ENCODE measurements at regions of chr10 and their contacts with region 1.

Region 1: GRCh38 chr10:63133056-63133820 is at the start of gene NRBF2:
- DNase-seq: peak; percentile 99
- ATAC-seq: peak; percentile 99 to 100
- total RNA-seq, gene NRBF2: 12.7 to 18.7 TPM

Region 2: DNA sequence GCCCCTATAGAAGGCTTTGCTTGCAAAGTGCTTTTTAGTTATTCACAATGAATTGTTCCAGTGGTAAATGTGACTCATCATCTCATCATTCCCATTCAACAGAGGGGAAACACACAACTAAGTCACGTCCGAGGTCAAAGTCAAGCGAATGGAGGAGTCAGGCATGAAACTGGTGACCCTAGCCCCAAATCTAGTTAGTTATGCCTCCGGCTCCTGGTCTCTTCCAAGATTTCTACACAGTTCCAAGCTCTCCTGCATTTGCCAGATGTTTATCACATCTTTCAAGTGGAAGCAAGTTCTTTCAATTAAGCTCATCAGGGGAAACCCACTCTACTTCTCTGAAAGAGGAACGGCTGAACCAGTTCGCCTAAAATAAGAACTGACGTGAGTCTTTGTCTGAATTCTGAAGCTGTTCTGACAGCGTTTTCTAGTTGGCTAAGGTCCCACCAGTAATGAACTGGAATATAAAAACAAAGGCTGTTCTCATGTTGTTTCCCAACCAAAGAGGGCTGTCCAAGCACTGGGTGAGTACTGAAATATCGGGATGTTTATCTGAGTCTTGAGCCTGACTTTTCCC is 141.0 kb before region 1 on chr10:
- intact Hi-C with region 1: loop called in 1 of 2 experiments (anchors 10 kb)
- DNase-seq: no peak
- ATAC-seq: peak; percentile 58 to 82

Region 3: DNA sequence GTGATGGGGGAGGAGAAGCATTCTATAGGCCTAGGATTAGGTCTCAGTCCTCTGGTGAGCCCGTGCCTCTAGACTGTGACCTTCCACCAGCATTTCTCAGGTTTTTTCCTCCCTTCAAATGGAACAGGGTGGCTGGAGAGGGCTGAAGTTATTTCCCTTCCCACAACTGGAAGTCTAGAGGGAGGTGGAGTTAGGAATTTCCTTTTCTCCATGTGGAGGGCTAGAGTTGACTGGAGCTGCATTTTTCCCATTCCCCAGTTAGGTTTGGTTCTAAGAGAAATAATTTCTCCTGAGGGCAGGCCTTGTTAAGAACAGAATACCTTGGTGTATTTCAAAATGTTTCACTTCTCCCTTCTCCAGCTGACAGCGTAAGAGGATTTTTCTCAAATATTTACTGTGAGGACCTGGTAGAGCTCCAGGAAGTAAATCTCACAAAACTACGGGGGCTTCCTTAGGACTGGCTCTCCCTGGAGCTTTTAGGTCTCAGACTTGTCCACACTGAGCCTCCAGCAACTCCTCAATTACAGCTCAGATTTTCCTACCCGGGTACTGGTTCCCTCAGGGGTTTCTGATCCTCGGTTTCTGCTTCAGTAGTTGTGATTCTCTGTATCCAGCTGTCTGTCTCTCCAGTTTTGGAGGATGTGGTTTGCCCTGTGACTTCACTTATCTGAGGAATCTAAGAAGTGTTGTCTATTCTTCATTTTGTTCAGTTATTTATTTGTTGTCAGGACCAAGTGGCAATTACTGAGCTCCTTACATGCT is 381.9 kb after region 1 on chr10:
- intact Hi-C with region 1: no loop called
- DNase-seq: no peak
- ATAC-seq: peak in 1 of 2 donors; percentile 62

Region 4: DNA sequence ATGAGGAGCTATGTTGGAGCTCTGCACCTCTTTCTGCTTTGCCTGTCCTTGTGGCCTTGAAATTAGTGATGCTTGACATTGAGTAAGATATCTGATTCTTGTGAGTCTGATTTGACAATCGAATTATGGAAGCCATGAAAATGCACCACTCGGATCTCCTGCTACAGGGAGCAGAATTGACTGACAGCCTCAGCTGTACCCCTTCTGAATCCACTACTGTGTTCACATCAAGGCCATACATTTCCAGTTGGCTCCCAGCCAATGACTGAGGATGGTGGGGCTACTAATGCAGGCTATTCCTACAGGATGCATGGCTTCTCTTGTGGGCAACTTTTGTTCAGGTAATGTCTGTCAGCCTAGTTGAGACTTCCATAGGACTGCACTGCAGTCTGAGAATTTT is 709.9 kb after region 1 on chr10:
- intact Hi-C with region 1: no loop called
- DNase-seq: no peak
- ATAC-seq: no peak